Right ventricle myocardium inferior (tissue), 1 donor: ENCODE measurements at regions of chr11 and their contacts with region 1.

Region 1: GRCh38 chr11:118659314-118659952 is 20.0 kb downstream of the TREH start:
- DNase-seq: peak; percentile 94
- ATAC-seq: peak; percentile 75

Region 2: DNA sequence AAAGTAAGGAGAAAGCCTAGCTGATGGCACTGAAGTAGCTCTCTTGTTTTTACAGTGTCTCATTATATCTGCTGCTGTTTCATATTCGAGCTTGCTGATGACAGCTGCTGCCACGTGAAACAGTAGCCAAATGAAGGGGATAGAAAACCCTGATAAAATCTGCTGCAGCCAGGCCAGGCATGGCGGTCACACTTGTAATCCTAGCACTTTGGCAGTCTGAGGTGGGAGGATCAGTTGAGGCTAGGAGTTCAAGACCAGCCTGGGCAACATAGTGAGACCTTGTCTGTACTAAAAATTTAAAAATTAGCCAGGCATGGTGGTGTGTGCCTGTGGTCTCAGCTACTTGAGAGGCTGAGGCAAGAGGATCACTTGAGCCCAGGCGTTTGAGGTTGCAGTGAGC is 107.1 kb before region 1 on chr11:
- intact Hi-C with region 1: no loop called
- DNase-seq: no peak
- ATAC-seq: no peak

Region 3: GRCh38 chr11:118592616-118593367 is 66.6 kb before region 1 on chr11:
- intact Hi-C with region 1: loop called (anchors 2 kb)
- DNase-seq: no peak
- ATAC-seq: peak; percentile 60

Region 4: DNA sequence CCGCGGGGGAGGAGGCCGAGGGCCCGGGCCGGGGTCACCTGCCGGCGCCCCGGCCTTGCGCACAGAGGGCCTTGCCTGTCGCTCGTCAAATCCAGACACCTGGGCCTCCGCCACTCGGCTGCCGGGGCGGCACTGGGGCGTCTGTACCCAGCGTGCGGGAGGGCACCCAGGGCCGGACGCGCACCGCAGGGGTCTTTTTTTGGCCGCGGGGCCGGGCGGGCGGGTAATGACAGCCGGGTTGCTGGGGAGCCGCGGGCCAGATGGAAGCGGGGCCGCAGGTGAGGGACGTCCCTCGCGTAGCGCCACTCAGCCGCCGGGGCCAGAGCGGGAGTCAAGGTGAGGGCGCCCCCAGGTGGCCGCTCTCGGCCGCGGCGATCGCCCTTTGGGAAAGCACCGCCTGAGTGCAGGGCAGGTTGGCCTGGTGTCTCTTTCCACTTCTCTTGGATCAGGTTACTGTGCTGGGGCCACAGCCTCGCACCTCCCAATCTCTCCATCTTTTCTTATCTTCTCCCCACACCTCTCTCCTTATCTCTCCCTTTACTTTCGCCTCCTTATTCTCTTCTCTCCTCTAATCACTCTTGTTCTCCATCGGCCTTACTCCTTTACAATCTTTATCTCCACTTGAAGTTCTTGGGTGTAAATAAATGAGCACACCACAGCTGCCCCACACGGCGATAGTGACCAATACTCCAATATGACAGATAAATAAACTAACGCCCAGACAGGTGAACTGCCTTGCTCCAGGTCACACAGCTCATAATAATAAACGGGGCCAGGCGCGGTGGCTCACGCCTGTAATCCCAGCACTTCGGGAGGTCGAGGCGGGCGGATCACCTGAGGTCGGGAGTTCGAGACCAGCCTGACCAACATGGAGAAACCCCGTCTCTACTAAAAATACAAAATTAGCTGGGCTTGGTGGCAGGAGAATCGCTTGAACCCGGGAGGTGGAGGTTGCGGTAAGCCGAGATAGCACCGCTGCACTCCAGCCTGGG is 48.3 kb before region 1 on chr11:
- intact Hi-C with region 1: loop called (anchors 2 kb)
- DNase-seq: peak; percentile 89
- ATAC-seq: peak; percentile 42

Region 5: GRCh38 chr11:118820412-118821357 is 161.3 kb after region 1 on chr11:
- intact Hi-C with region 1: no loop called
- DNase-seq: peak; percentile 81
- ATAC-seq: peak; percentile 93